Heart left ventricle (tissue), 16 donors: ENCODE measurements at regions of chr7 and their contacts with region 1.

Region 1: DNA sequence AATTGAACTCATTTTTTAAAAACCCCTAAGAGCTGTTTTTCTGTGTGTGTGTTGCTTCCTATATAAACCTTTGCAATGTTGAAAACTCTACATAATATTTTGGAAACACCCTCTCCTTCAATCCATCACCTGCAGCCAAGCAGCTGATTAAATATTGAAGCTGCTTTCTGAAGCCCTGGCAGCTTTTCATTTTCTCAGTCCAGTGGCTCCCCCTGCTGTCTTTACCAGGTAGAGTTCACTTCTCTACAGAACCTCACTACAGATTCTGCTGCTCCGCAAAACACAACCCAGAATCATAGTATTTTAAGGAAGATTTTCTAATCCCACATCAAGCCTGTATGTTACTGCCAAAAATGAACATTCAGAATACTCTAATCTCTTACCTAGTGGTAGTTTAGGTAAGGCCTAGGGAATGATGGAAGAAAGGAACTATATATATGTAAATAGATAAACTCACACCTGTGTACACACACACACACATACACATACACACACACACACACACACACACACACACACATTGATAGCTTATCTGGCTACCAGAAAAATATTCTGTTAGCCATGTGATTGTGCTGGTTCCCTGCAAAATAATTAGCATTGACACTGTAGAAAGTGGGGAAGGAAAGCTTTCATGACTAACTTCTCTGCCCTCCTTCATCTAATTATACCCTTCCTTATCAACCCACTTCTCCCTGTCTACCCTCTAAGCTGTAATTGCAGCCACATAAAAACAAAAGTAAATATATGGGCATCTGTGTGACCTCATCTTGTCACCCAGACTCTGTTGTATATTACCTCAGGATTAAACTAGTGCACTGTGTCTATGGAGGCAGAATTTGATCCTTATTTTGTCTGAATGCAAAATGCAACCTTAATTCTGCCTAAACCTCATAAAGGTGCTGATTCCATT is 229.5 kb upstream of the FZD1 start:
- DNase-seq: peak in 3 of 5 donors; percentile 26 to 50 (median 47)
- ATAC-seq: peak; percentile 32 to 77 (median 62)
- H3K4me3 ChIP-seq: no peak overlapping the region
- H3K27ac ChIP-seq: no peak overlapping the region
- H3K4me1 ChIP-seq: peaks cover 0 to 6% (median 0%) of the 10 kb centered on the region in 12 donors
- H3K27me3 ChIP-seq: no peaks in the 10 kb centered on the region
- CTCF ChIP-seq: peak; percentile 45 to 77 (median 70)
- POLR2A ChIP-seq: no peak

Region 2: GRCh38 chr7:90455163-90456030 is 579.3 kb before region 1 on chr7:
- intact Hi-C with region 1: loop called in 9 of 10 experiments (anchors 1 to 10 kb)
- DNase-seq: no peak
- ATAC-seq: peak in 3 of 4 donors; percentile 65 to 75 (median 68)
- H3K4me3 ChIP-seq: peak overlapping the region in 6 of 12 donors; percentile 7 to 35 (median 24)
- H3K27ac ChIP-seq: no peak overlapping the region
- H3K4me1 ChIP-seq: peaks cover 0 to 8% (median 2%) of the 10 kb centered on the region in 12 donors
- H3K27me3 ChIP-seq: no peaks in the 10 kb centered on the region
- CTCF ChIP-seq: peak; percentile 42 to 82 (median 66)
- POLR2A ChIP-seq: no peak

Region 3: GRCh38 chr7:90621125-90621746 is 413.5 kb before region 1 on chr7:
- intact Hi-C with region 1: loop called in 2 of 10 experiments (anchors 5 to 10 kb)
- DNase-seq: no peak
- ATAC-seq: no peak
- H3K4me3 ChIP-seq: no peak overlapping the region
- H3K27ac ChIP-seq: no peak overlapping the region
- H3K4me1 ChIP-seq: peaks cover 0 to 53% (median 33%) of the 10 kb centered on the region in 12 donors
- H3K27me3 ChIP-seq: no peaks in the 10 kb centered on the region
- CTCF ChIP-seq: no peak
- POLR2A ChIP-seq: no peak

Region 4: DNA sequence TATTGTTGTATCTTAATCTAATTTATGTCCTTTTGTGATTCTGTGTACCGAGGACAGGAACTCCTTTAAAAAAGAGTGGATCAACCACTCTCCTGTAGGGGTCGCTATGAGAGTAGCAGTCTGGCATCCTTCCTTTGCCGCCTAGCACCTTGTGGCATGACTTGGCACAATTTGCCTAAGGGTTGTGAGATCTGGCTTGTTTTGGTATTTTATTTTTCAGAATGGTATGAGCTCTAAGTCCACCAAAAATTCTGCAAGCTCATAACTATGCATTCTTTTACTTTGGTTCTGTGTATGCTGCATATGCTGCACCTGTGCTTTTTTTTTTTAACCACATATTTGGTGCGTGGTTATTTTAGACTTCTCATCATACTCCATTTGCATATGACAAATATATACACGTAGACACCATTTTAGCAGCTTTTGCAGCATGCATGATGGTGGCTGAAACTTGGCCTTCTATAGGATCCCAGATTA is 325.8 kb before region 1 on chr7:
- intact Hi-C with region 1: loop called in 1 of 10 experiments (anchors 10 kb)
- DNase-seq: no peak
- ATAC-seq: no peak
- H3K4me3 ChIP-seq: no peak overlapping the region
- H3K27ac ChIP-seq: no peak overlapping the region
- H3K4me1 ChIP-seq: peaks cover 0 to 31% (median 12%) of the 10 kb centered on the region in 12 donors
- H3K27me3 ChIP-seq: no peaks in the 10 kb centered on the region
- CTCF ChIP-seq: peak; percentile 10 to 44 (median 30)
- POLR2A ChIP-seq: no peak

Region 5: GRCh38 chr7:90869335-90869734 is 165.4 kb before region 1 on chr7:
- intact Hi-C with region 1: loop called in 1 of 10 experiments (anchors 10 kb)
- DNase-seq: no peak
- ATAC-seq: no peak
- H3K4me3 ChIP-seq: no peak overlapping the region
- H3K27ac ChIP-seq: no peak overlapping the region
- H3K4me1 ChIP-seq: no peaks in the 10 kb centered on the region
- H3K27me3 ChIP-seq: no peaks in the 10 kb centered on the region
- CTCF ChIP-seq: no peak
- POLR2A ChIP-seq: no peak

Region 6: DNA sequence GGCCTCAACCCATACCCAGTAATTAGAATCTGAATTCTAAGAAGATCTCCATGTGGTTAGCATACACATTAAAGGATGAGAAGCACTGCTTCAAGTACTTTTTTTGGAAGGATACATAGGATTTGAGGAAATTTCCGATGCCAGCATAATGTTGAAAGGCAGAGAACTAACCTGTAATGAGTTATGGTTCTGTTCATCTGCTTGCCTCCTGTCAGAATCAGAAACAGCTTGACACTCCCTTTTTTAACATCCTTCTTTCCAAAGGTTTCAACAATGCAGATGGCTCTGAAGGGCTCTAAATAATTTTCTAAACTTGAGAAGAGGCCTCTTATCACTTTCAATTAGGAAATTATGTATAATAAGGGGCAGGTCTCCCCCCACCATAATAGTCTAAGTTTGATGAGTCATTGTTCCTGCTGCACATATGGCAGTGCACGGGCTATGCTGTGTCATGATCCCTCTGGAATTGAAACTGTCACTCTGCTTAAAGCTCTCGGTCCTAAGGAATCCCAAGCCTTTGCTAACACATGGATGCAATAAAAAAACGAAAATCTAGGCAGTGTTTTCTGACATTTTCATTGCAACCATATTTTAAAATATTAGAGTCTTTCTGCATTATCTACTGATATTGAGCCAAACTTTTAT is 61.7 kb before region 1 on chr7:
- intact Hi-C with region 1: no loop called
- DNase-seq: no peak
- ATAC-seq: no peak
- H3K4me3 ChIP-seq: no peak overlapping the region
- H3K27ac ChIP-seq: no peak overlapping the region
- H3K4me1 ChIP-seq: no peaks in the 10 kb centered on the region
- H3K27me3 ChIP-seq: no peaks in the 10 kb centered on the region
- CTCF ChIP-seq: no peak
- POLR2A ChIP-seq: no peak